ENCODE measurements at regions of chr1 and their contacts with region 1.

Region 1: GRCh38 chr1:47997289-47998200 is at the start of gene TRABD2B:
- DNase-seq: peak; percentile 84
- ATAC-seq: peak; percentile 68
- H3K4me3 ChIP-seq: peak within 1 kb of the TSS; percentile 74
- H3K27ac ChIP-seq: no peak within 1 kb of the TSS
- H3K4me1 ChIP-seq: peaks cover 18% of the 10 kb centered on the region
- H3K27me3 ChIP-seq: no peaks in the 10 kb centered on the region
- CTCF ChIP-seq: peak; percentile 90
- total RNA-seq, gene TRABD2B: 0.44 and 0.63 TPM in 2 replicates

Region 2: GRCh38 chr1:47725992-47726855 is 271.3 kb before region 1 on chr1:
- CTCF ChIA-PET with region 1: interaction called, 10 read pairs
- POLR2A ChIA-PET with region 1: interaction called, 4 read pairs
- intact Hi-C with region 1: no loop called
- DNase-seq: peak; percentile 87
- ATAC-seq: peak; percentile 95
- H3K4me3 ChIP-seq: peak overlapping the region; percentile 46
- H3K27ac ChIP-seq: no peak overlapping the region
- H3K4me1 ChIP-seq: no peaks in the 10 kb centered on the region
- H3K27me3 ChIP-seq: peaks cover 34% of the 10 kb centered on the region
- CTCF ChIP-seq: peak; percentile 93

Region 3: GRCh38 chr1:47785561-47786271 is 211.8 kb before region 1 on chr1:
- CTCF ChIA-PET with region 1: interaction called, 5 read pairs
- POLR2A ChIA-PET with region 1: no interaction called
- intact Hi-C with region 1: loop called (anchors 10 kb)
- DNase-seq: peak; percentile 22
- ATAC-seq: peak; percentile 79
- H3K4me3 ChIP-seq: no peak overlapping the region
- H3K27ac ChIP-seq: no peak overlapping the region
- H3K4me1 ChIP-seq: peaks cover 16% of the 10 kb centered on the region
- H3K27me3 ChIP-seq: no peaks in the 10 kb centered on the region
- CTCF ChIP-seq: peak; percentile 48

Region 4: GRCh38 chr1:47894713-47895537 is 102.6 kb before region 1 on chr1:
- CTCF ChIA-PET with region 1: interaction called, 3 read pairs
- POLR2A ChIA-PET with region 1: no interaction called
- intact Hi-C with region 1: loop called (anchors 10 kb)
- DNase-seq: peak; percentile 96
- ATAC-seq: peak; percentile 90
- H3K4me3 ChIP-seq: no peak overlapping the region
- H3K27ac ChIP-seq: peak overlapping the region; percentile 92
- H3K4me1 ChIP-seq: peaks cover 37% of the 10 kb centered on the region
- H3K27me3 ChIP-seq: no peaks in the 10 kb centered on the region
- CTCF ChIP-seq: no peak

Region 5: GRCh38 chr1:48039088-48040054 is 41.8 kb after region 1 on chr1:
- CTCF ChIA-PET with region 1: no interaction called
- POLR2A ChIA-PET with region 1: no interaction called
- intact Hi-C with region 1: no loop called
- DNase-seq: no peak
- ATAC-seq: no peak
- H3K4me3 ChIP-seq: no peak overlapping the region
- H3K27ac ChIP-seq: no peak overlapping the region
- H3K4me1 ChIP-seq: no peaks in the 10 kb centered on the region
- H3K27me3 ChIP-seq: peaks cover 8% of the 10 kb centered on the region; the same call in 1 of the 2 replicates
- CTCF ChIP-seq: no peak

Region 6: DNA sequence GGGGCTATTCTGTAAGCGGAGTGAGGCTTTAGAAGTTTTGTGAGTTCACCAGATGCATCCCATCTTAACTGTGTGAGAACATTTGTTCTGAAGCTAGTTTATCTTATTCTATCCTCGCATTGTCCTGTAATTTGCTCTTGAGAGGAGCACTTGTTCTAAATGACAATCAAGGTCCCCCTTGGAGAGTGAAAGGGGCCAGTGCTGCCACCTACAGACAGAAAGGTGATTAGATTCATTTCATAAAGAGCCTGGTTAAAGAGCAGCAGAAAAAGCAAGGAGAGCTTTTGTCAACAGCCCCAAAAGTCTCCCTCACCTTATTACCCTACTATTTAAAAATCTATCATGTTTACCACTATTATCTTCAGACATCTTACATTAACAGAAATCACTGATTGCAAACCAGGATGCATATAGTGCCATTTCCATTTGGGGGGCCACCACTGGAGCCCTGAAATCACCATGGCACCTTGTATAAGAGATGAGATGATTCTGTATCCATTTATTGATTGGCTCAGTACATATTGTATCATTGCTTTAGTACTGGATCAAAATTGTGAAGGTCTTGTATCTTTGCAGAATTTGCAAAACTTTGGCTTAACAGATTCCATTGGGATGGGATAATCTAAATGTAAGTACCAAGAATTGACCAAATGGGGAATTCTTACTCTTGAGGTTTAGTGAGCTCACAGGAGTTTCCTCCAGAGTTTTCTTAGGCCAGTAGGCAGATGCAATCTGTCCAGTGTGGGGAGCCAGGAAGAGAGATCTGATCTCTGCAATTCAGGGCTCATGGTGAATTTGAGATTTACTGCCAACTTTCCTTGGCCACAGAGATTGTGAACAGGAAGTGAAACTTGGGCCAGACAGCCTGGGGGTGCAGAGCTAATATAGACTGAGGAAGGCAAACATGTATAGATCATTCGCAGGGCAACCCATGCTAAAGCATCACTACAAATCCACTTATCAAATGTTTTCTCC is 63.9 kb after region 1 on chr1:
- CTCF ChIA-PET with region 1: interaction called, 8 read pairs
- POLR2A ChIA-PET with region 1: interaction called, 5 read pairs
- intact Hi-C with region 1: loop called (anchors 1 kb)
- DNase-seq: peak; percentile 78
- ATAC-seq: peak; percentile 71
- H3K4me3 ChIP-seq: no peak overlapping the region
- H3K27ac ChIP-seq: no peak overlapping the region
- H3K4me1 ChIP-seq: no peaks in the 10 kb centered on the region
- H3K27me3 ChIP-seq: no peaks in the 10 kb centered on the region
- CTCF ChIP-seq: peak; percentile 81